CD8-positive, alpha-beta T cell (primary cell): ENCODE measurements at regions of chr1 and their contacts with region 1.

Region 1: GRCh38 chr1:155091071-155091709 is 12.6 kb downstream of the EFNA3 start:
- DNase-seq: peak; percentile 52 to 89 (median 79)
- ATAC-seq: peak; percentile 92
- H3K4me3 ChIP-seq: no peak overlapping the region
- H3K4me3 Mint-ChIP-seq: no peak overlapping the region
- H3K27ac ChIP-seq: no peak overlapping the region
- H3K27ac Mint-ChIP-seq: no peak overlapping the region
- H3K4me1 ChIP-seq: peaks cover 11% of the 10 kb centered on the region
- H3K4me1 Mint-ChIP-seq: peaks cover 8% of the 10 kb centered on the region
- H3K27me3 ChIP-seq: no peaks in the 10 kb centered on the region
- H3K27me3 Mint-ChIP-seq: peaks cover 3% of the 10 kb centered on the region
- CTCF ChIP-seq: peak; percentile 94

Region 2: GRCh38 chr1:155070721-155071569 is 20.2 kb before region 1 on chr1:
- CTCF ChIA-PET with region 1: interaction called, 219 read pairs
- POLR2A ChIA-PET with region 1: no interaction called
- intact Hi-C with region 1: no loop called
- DNase-seq: peak; percentile 55 to 91 (median 80)
- ATAC-seq: peak; percentile 99
- H3K4me3 ChIP-seq: peak overlapping the region; percentile 41 to 55
- H3K4me3 Mint-ChIP-seq: peak overlapping the region; percentile 54
- H3K27ac ChIP-seq: peak overlapping the region; percentile 43 to 53
- H3K27ac Mint-ChIP-seq: no peak overlapping the region
- H3K4me1 ChIP-seq: peaks cover 30% of the 10 kb centered on the region
- H3K4me1 Mint-ChIP-seq: peaks cover 32% of the 10 kb centered on the region
- H3K27me3 ChIP-seq: no peaks in the 10 kb centered on the region
- H3K27me3 Mint-ChIP-seq: no peaks in the 10 kb centered on the region
- CTCF ChIP-seq: peak; percentile 51

Region 3: DNA sequence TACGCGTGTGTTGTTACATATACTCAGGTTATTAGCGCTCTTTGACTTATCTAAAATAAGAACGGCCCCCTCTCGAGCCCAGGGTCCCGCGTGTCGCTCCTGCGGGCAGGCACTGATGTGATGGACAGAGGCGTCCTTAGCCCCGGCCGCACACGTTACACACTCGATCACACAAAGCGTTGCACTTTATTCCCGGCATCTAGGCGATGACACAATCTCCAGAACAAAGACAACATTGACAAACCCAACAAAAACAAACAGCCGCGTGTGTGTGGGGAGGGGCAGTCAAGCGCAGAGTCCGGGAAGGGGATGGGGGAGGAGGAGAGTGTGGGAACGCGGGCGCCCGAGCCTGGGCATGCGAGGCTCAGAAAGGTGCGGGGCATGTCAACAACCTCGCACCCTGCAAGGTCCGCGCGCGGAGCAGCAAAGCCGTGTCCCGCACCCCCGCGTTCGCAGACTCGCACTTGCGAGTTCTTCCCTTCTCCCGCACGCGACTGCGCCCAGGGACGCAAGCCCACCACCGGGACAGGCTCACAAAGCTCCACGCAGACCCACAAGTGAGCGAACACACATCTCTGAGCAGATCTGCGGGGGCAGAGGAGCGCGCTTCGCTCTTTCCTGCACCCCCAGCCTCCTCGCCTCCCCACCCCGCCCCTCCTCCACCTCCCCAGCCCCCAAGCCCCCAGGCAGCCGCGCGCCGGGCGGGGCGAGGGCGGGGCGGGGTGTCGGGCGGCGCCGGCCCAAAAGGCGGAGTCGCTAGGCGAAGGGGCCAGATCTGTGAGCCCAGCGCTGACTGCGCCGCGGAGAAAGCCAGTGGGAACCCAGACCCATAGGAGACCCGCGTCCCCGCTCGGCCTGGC is 36.1 kb after region 1 on chr1 and contains the start of gene EFNA1:
- CTCF ChIA-PET with region 1: interaction called, 24 read pairs
- POLR2A ChIA-PET with region 1: no interaction called
- intact Hi-C with region 1: loop called in 1 of 2 experiments (anchors 5 kb)
- DNase-seq: peak in 7 of 9 experiments; percentile 36 to 64 (median 48)
- ATAC-seq: peak; percentile 47
- H3K4me3 ChIP-seq: peak within 1 kb of the TSS; percentile 53 to 59
- H3K4me3 Mint-ChIP-seq: peak within 1 kb of the TSS; percentile 86
- H3K27ac ChIP-seq: no peak within 1 kb of the TSS
- H3K27ac Mint-ChIP-seq: peak within 1 kb of the TSS; percentile 87
- H3K4me1 ChIP-seq: peaks cover 36% of the 10 kb centered on the region
- H3K4me1 Mint-ChIP-seq: peaks cover 45% of the 10 kb centered on the region
- H3K27me3 ChIP-seq: peaks cover 0 to 2% of the 10 kb centered on the region in 2 experiments
- H3K27me3 Mint-ChIP-seq: no peaks in the 10 kb centered on the region
- CTCF ChIP-seq: no peak
- total RNA-seq, gene EFNA1: 7.3 to 10.4 TPM

Region 4: GRCh38 chr1:155145491-155145890 is 54.3 kb after region 1 on chr1:
- CTCF ChIA-PET with region 1: interaction called, 17 read pairs
- POLR2A ChIA-PET with region 1: no interaction called
- intact Hi-C with region 1: no loop called
- DNase-seq: no peak
- ATAC-seq: no peak
- H3K4me3 ChIP-seq: no peak overlapping the region
- H3K4me3 Mint-ChIP-seq: no peak overlapping the region
- H3K27ac ChIP-seq: no peak overlapping the region
- H3K27ac Mint-ChIP-seq: no peak overlapping the region
- H3K4me1 ChIP-seq: no peaks in the 10 kb centered on the region
- H3K4me1 Mint-ChIP-seq: peaks cover 2% of the 10 kb centered on the region
- H3K27me3 ChIP-seq: no peaks in the 10 kb centered on the region
- H3K27me3 Mint-ChIP-seq: peaks cover 25% of the 10 kb centered on the region
- CTCF ChIP-seq: no peak

Region 5: GRCh38 chr1:155227261-155228095 is 136.3 kb after region 1 on chr1:
- CTCF ChIA-PET with region 1: interaction called, 7 read pairs
- POLR2A ChIA-PET with region 1: no interaction called
- intact Hi-C with region 1: loop called in 1 of 2 experiments (anchors 2 kb)
- DNase-seq: peak; percentile 95 to 100 (median 98)
- ATAC-seq: peak; percentile 95
- H3K4me3 ChIP-seq: peak overlapping the region; percentile 71 to 74
- H3K4me3 Mint-ChIP-seq: peak overlapping the region; percentile 88
- H3K27ac ChIP-seq: peak overlapping the region; percentile 70 to 86
- H3K27ac Mint-ChIP-seq: peak overlapping the region; percentile 85
- H3K4me1 ChIP-seq: peaks cover 18% of the 10 kb centered on the region
- H3K4me1 Mint-ChIP-seq: peaks cover 24% of the 10 kb centered on the region
- H3K27me3 ChIP-seq: no peaks in the 10 kb centered on the region
- H3K27me3 Mint-ChIP-seq: no peaks in the 10 kb centered on the region
- CTCF ChIP-seq: no peak